Naive thymus-derived CD4-positive, alpha-beta T cell (primary cell): ENCODE measurements at regions of chr11 and their contacts with region 1.

Region 1: DNA sequence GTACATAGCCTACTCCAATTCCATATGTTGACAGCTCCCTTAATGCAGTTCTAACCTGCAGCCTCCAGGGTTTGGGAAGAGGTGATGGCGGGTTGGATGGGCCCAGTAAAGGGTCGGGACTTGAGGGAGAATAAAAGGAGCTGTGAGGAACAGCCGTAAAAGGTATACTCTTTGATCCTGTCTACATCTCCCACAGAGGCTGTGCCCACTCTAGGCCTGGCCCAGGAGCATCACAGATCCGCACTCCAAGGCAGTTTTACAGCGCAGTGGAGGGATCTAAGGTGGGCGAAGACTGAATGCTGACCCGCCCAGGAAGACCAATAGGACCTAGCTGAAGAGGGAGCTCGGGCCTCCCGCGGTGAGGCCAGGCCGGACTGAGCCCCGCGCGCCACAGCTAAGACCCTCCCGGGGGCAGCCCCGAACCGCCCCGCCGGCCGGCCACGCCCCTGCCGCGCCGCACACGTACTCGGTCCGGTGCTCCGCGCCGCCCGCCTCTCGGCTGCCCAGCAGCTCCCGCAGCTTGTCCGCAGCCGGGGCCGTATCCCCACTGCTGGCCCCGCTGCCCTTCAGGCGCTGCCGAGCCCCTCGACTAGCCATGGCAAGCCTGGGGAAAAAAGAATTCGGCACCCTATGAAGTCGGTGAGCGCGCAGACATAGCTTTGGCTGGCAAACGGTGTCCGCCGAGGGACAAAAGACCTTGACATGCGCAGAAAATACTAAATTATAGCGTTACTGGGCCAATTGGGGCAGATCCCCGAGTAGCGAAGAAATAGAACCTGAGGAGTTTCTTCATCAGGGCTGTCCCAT is at the start of gene ALG9:
- DNase-seq: peak; percentile 79 to 94 (median 88)
- ATAC-seq: peak; percentile 91
- H3K4me3 ChIP-seq: peak within 1 kb of the TSS; percentile 74
- H3K4me3 Mint-ChIP-seq: peak within 1 kb of the TSS; percentile 86 to 96 (median 93)
- H3K27ac ChIP-seq: peak within 1 kb of the TSS; percentile 91
- H3K27ac Mint-ChIP-seq: peak within 1 kb of the TSS; percentile 87 to 98 (median 94)
- H3K4me1 ChIP-seq: peaks cover 8 to 10% of the 10 kb centered on the region in 2 donors
- H3K4me1 Mint-ChIP-seq: peaks cover 9 to 41% (median 34%) of the 10 kb centered on the region in 7 donors
- H3K27me3 ChIP-seq: no peaks in the 10 kb centered on the region
- H3K27me3 Mint-ChIP-seq: no peaks in the 10 kb centered on the region
- total RNA-seq, gene ALG9: 16.4 to 30.2 (median 29.2) TPM

Region 2: GRCh38 chr11:111730871-111731591 is 140.1 kb before region 1 on chr11:
- CTCF ChIA-PET with region 1: no interaction called
- POLR2A ChIA-PET with region 1: no interaction called
- intact Hi-C with region 1: no loop called
- DNase-seq: no peak
- ATAC-seq: no peak
- H3K4me3 ChIP-seq: no peak overlapping the region
- H3K4me3 Mint-ChIP-seq: no peak overlapping the region
- H3K27ac ChIP-seq: no peak overlapping the region
- H3K27ac Mint-ChIP-seq: peak overlapping the region in 1 of 9 donors; percentile 31
- H3K4me1 ChIP-seq: no peaks in the 10 kb centered on the region
- H3K4me1 Mint-ChIP-seq: peaks cover 0 to 11% (median 8%) of the 10 kb centered on the region in 7 donors
- H3K27me3 ChIP-seq: no peaks in the 10 kb centered on the region
- H3K27me3 Mint-ChIP-seq: no peaks in the 10 kb centered on the region

Region 3: GRCh38 chr11:112074026-112074811 is 203.1 kb after region 1 on chr11 and contains the start of gene NKAPD1:
- CTCF ChIA-PET with region 1: no interaction called
- POLR2A ChIA-PET with region 1: no interaction called
- intact Hi-C with region 1: loop called in 1 of 2 experiments (anchors 2 kb)
- DNase-seq: peak; percentile 64 to 88 (median 84)
- ATAC-seq: peak; percentile 94
- H3K4me3 ChIP-seq: peak within 1 kb of the TSS; percentile 97
- H3K4me3 Mint-ChIP-seq: peak within 1 kb of the TSS; percentile 80 to 98 (median 94)
- H3K27ac ChIP-seq: peak within 1 kb of the TSS; percentile 79
- H3K27ac Mint-ChIP-seq: peak within 1 kb of the TSS; percentile 84 to 96 (median 95)
- H3K4me1 ChIP-seq: peaks cover 5 to 11% of the 10 kb centered on the region in 2 donors
- H3K4me1 Mint-ChIP-seq: peaks cover 14 to 49% (median 40%) of the 10 kb centered on the region in 7 donors
- H3K27me3 ChIP-seq: no peaks in the 10 kb centered on the region
- H3K27me3 Mint-ChIP-seq: peaks cover 6 to 22% (median 12%) of the 10 kb centered on the region in 5 donors
- total RNA-seq, gene NKAPD1: 12.4 to 22.9 (median 19.7) TPM

Region 4: DNA sequence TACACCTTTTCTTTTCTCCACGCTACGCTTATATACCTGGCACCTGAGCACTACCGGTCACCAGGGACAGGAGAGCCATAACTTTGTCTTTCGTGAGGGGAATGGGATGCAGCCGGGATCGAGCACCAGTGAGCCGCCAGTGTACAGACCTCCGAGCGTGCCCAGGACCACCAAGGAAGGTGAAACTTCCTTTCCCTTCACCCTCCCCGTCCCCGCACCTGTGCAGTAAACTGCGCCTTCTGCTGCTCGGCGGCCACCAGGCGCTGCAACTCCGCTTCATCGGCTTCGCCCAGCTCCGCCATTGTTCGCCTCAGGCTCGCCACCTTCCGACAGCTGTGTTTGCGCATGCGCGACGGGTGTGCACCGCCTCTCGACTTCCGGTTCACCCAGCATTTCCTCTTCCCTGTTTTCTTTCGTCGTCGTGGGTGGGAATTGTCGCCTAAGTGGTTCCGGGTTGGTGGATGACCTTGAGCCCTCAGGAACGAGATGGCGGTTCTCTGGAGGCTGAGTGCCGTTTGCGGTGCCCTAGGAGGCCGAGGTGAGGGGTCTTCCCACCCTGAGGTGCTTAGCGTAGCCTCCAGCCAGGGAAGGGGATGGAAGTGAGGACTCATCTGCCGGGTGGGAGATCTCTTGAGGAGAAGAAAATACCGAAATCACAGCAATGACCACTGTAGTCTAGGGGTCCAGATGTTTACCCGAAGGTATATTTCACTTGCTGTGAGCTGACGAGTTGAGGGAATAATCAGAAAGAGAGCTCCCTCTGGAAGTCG is 215.5 kb after region 1 on chr11 and contains the starts of genes SDHD and TIMM8B:
- CTCF ChIA-PET with region 1: no interaction called
- POLR2A ChIA-PET with region 1: interaction called, 5 read pairs
- intact Hi-C with region 1: loop called (anchors 2 kb)
- DNase-seq: peak; percentile 90 to 98 (median 97)
- ATAC-seq: peak; percentile 94
- H3K4me3 ChIP-seq: peak within 1 kb of the TSS; percentile 99
- H3K4me3 Mint-ChIP-seq: peak within 1 kb of the TSS; percentile 90 to 100 (median 98)
- H3K27ac ChIP-seq: peak within 1 kb of the TSS; percentile 76
- H3K27ac Mint-ChIP-seq: peak within 1 kb of the TSS; percentile 92 to 99 (median 96)
- H3K4me1 ChIP-seq: peaks cover 21 to 23% of the 10 kb centered on the region in 2 donors
- H3K4me1 Mint-ChIP-seq: peaks cover 44 to 69% (median 62%) of the 10 kb centered on the region in 7 donors
- H3K27me3 ChIP-seq: no peaks in the 10 kb centered on the region
- H3K27me3 Mint-ChIP-seq: peaks cover 0 to 2% (median 0%) of the 10 kb centered on the region in 5 donors
- total RNA-seq, gene SDHD: 39.6 to 84.4 (median 65.8) TPM
- total RNA-seq, gene TIMM8B: 15.5 to 61.1 (median 24.3) TPM

Region 5: GRCh38 chr11:112724496-112724790 is 853.4 kb after region 1 on chr11:
- CTCF ChIA-PET with region 1: no interaction called
- POLR2A ChIA-PET with region 1: no interaction called
- intact Hi-C with region 1: no loop called
- DNase-seq: no peak
- ATAC-seq: no peak
- H3K4me3 ChIP-seq: no peak overlapping the region
- H3K4me3 Mint-ChIP-seq: no peak overlapping the region
- H3K27ac ChIP-seq: no peak overlapping the region
- H3K27ac Mint-ChIP-seq: no peak overlapping the region
- H3K4me1 ChIP-seq: no peaks in the 10 kb centered on the region
- H3K4me1 Mint-ChIP-seq: no peaks in the 10 kb centered on the region
- H3K27me3 ChIP-seq: no peaks in the 10 kb centered on the region
- H3K27me3 Mint-ChIP-seq: peaks cover 9 to 38% (median 25%) of the 10 kb centered on the region in 5 donors